MCF 10A (cell line): ENCODE measurements at regions of chr20 and their contacts with region 1.

Region 1: DNA sequence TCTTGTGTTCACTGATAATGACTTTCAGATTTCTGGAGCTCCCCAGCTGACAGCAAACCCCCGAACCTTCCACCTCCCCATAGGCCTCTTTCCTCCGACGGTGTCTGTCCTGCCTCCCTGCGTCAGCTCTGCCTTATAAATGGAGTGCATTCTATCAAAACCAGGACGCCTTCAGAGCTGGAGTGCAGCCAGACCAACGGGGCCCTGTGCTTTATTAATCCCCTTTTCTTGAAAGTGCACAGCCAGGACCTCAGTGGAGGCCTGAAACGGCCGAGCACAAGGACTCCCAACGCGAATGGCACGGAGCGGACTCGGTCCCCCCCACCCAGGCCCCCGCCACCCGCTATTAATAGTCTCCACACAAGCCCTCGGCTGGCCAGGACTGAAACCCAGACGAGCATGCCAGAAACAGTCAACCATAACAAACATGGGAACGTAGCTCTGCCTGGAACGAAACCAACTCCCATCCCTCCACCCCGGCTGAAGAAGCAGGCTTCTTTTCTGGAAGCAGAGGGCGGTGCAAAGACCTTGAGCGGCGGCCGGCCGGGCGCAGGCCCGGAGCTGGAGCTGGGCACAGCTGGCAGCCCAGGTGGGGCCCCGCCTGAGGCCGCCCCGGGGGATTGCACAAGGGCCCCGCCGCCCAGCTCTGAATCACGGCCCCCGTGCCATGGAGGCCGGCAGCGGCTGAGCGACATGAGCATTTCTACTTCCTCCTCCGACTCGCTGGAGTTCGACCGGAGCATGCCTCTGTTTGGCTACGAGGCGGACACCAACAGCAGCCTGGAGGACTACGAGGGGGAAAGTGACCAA is 42.3 kb upstream of the NAA20 start:
- DNase-seq: peak; percentile 95
- H3K4me3 Mint-ChIP-seq: peak overlapping the region; percentile 80
- H3K27ac Mint-ChIP-seq: peak overlapping the region; percentile 83
- H3K4me1 Mint-ChIP-seq: peaks cover 36% of the 10 kb centered on the region
- H3K27me3 Mint-ChIP-seq: no peaks in the 10 kb centered on the region
- CTCF ChIP-seq: no peak

Region 2: DNA sequence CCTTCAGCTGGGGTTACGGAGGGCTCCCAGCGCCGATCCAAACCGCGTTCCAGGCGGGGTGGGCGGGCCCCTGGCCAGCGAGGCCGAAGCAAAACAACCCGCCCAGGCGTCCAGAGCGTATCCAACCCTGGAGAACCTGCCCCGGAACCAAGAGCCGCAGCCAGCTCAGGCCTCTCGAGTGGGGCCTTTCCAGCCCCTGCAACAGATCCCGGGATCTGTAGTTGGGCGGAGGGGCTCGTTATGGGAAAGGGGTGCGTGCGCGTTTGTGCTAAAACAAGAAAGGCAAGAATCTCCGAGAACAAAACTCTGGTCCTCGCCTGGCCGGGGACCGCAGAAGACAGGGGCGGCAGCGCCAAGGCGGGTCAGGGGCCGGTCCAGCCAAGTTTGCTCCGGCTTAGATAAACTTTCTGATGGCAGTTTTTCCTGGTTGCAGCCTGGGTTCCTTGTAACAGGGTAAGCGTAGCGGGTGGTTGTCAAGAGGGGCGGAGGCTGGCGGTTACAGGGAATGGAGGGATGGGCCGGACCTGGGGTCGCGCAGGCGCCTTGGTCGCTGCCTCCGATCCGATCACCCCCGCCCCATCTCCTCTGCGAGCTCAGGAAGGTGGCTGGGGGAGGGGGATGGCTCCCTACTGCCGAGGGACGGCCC is 217.2 kb before region 1 on chr20:
- CTCF ChIA-PET with region 1: interaction called, 3 read pairs
- POLR2A ChIA-PET with region 1: interaction called, 22 read pairs
- intact Hi-C with region 1: no loop called
- DNase-seq: peak; percentile 68
- H3K4me3 Mint-ChIP-seq: peak overlapping the region; percentile 81
- H3K27ac Mint-ChIP-seq: peak overlapping the region; percentile 70
- H3K4me1 Mint-ChIP-seq: peaks cover 35% of the 10 kb centered on the region
- H3K27me3 Mint-ChIP-seq: no peaks in the 10 kb centered on the region
- CTCF ChIP-seq: no peak

Region 3: DNA sequence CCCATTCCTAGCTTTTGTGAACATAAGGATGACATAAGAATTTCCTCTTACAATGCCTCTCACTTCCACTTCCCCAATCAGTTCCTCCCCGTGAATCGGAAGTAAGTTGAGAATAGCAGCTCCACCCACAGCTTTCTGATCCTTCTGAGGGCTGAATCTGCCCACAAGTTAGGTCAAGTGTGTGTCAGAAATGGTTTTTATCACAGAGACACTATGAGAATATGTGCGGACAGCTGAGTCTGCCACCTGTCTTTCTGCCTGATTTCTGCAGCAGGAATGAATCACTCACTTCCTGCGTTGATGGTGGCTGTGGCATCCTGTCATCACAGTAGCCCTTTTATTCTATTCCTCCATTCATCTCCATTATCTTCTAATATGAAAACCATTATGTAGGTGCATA is 146.6 kb before region 1 on chr20:
- CTCF ChIA-PET with region 1: interaction called, 7 read pairs
- POLR2A ChIA-PET with region 1: interaction called, 14 read pairs
- intact Hi-C with region 1: no loop called
- DNase-seq: peak; percentile 72
- H3K4me3 Mint-ChIP-seq: peak overlapping the region; percentile 9
- H3K27ac Mint-ChIP-seq: peak overlapping the region; percentile 60
- H3K4me1 Mint-ChIP-seq: peaks cover 17% of the 10 kb centered on the region
- H3K27me3 Mint-ChIP-seq: no peaks in the 10 kb centered on the region
- CTCF ChIP-seq: peak; percentile 46

Region 4: DNA sequence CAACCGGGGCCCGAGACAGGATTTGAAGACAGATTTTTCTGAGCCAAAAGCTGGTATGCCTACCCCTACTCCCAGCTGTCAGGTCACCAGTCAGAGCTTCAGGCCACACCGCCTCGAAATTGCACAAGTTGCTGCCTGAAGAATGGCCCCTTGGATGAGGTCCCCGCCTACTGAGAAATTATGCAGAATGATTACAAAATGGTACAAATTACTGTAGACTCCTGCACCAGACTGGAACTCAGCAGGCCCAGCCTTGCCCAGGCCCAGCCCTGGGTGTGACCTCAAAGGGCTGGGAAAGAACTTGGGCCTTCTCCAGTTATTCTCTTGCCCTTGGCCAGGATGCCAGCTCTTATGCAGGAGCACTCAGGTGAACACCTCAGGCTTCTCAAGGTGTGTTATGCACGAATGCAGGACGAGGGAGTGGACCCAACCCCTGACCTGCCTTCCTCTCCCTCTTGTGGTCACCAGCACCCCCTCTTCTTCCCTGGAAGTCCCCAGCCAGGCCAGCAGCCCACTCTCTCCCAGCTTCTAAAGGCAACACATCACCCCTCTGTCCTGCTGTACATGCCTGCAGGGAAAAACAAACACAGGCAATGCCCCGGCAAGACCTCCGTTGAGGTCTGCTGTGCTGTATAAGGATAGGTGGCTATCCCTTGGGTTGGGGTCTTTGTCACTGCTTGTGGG is 46.4 kb before region 1 on chr20:
- CTCF ChIA-PET with region 1: interaction called, 26 read pairs
- POLR2A ChIA-PET with region 1: interaction called, 177 read pairs
- intact Hi-C with region 1: loop called (anchors 2 kb)
- DNase-seq: peak; percentile 97
- H3K4me3 Mint-ChIP-seq: peak overlapping the region; percentile 14
- H3K27ac Mint-ChIP-seq: peak overlapping the region; percentile 90
- H3K4me1 Mint-ChIP-seq: peaks cover 19% of the 10 kb centered on the region
- H3K27me3 Mint-ChIP-seq: no peaks in the 10 kb centered on the region
- CTCF ChIP-seq: no peak

Region 5: DNA sequence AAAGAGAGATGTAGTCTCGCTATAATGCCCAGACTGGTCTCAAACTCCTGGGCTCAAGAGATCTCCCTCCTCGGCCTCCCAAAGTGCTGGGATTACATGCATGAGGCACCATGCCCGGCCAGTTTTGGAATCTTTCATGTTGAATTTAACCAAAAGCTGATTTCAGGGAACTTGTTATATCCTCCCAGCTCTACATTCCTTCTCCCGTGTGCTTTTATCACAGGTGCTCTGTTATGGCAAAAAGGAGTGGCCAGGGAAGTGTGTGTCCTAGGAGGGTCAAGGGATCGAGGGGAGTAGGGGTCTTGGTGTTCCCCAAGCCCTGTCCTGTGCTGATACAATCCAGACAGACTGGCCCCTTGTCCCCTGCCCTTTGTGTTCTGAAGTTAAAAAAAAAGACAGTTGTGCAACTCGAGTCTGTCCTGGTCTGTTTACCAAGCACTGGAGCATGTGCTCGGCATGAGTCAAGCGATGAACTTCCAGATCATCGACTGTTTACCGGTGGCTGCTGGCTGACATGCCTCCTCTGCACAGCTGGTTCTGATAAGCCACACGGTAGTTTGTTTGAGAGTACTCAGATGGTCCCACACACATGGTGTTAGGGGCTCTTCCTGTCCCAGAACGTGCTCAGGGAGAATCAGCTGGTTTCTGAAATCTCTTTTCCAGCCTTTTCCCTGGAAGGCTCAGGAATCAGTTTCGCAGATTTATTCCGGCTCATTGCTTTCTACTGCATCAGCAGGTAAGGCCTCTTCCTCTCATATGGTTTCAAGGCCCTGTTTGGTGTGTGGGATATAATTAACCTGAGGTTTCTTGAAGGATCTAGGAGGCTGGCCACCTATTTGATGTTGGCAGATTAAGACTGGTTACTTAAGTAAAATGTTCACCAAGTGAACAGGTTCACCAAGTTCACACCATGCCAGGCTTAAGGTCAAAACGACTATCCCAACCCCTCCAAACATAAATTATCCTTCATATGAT is 10.3 kb before region 1 on chr20:
- CTCF ChIA-PET with region 1: interaction called, 16 read pairs
- POLR2A ChIA-PET with region 1: interaction called, 354 read pairs
- intact Hi-C with region 1: no loop called
- DNase-seq: peak; percentile 80
- H3K4me3 Mint-ChIP-seq: no peak overlapping the region
- H3K27ac Mint-ChIP-seq: peak overlapping the region; percentile 87
- H3K4me1 Mint-ChIP-seq: peaks cover 15% of the 10 kb centered on the region
- H3K27me3 Mint-ChIP-seq: no peaks in the 10 kb centered on the region
- CTCF ChIP-seq: no peak

Region 6: GRCh38 chr20:20052074-20052970 is 77.5 kb after region 1 on chr20 and contains the starts of genes CFAP61 and CRNKL1:
- CTCF ChIA-PET with region 1: interaction called, 4 read pairs
- POLR2A ChIA-PET with region 1: interaction called, 25 read pairs
- intact Hi-C with region 1: no loop called
- DNase-seq: peak; percentile 96
- H3K4me3 Mint-ChIP-seq: peak within 1 kb of the TSS; percentile 97
- H3K27ac Mint-ChIP-seq: peak within 1 kb of the TSS; percentile 96
- H3K4me1 Mint-ChIP-seq: peaks cover 10% of the 10 kb centered on the region
- H3K27me3 Mint-ChIP-seq: no peaks in the 10 kb centered on the region
- CTCF ChIP-seq: no peak
- total RNA-seq, gene CFAP61: 1.4 and 1.5 TPM in 2 replicates
- total RNA-seq, gene CRNKL1: 19.4 and 20.1 TPM in 2 replicates

Region 7: GRCh38 chr20:20353576-20353975 is 378.7 kb after region 1 on chr20:
- CTCF ChIA-PET with region 1: no interaction called
- POLR2A ChIA-PET with region 1: no interaction called
- intact Hi-C with region 1: no loop called
- DNase-seq: no peak
- H3K4me3 Mint-ChIP-seq: no peak overlapping the region
- H3K27ac Mint-ChIP-seq: no peak overlapping the region
- H3K4me1 Mint-ChIP-seq: no peaks in the 10 kb centered on the region
- H3K27me3 Mint-ChIP-seq: no peaks in the 10 kb centered on the region
- CTCF ChIP-seq: no peak